RWPE1 (cell line): ENCODE measurements at regions of chr10 and their contacts with region 1.

Region 1: DNA sequence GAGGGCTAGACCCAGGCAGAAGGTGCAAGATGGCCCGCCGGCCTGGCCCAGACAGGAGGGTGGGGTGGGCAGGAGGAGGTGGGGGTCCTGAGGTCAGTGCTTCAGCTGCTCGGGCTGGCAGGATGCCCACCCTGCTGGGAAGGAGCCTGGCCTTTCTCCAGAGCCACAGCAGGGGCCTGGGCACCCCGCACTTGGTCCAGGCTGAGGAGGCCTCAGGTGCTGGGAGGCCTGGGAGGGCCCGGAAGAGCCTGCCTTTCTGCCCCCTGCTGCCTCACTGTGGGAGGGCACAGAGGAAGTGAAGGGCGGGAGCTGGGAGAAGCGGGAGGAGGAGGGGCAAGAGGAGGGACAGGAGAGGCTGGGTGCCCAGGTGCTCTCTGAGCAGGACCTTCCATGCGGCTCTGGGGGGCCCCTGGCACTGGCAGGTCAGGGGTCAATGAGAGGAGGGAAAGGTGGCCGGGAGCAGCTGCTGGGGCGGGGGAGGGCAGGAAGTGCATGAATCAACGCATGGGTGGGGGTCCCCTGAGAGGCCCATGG is 49.7 kb downstream of the PWWP2B start:
- DNase-seq: peak; percentile 64
- H3K27ac ChIP-seq: peak overlapping the region; percentile 99
- CTCF ChIP-seq: peak; percentile 47

Region 2: GRCh38 chr10:131167036-131167860 is 1279.5 kb before region 1 on chr10:
- CTCF ChIA-PET with region 1: no interaction called
- POLR2A ChIA-PET with region 1: no interaction called
- DNase-seq: no peak
- H3K27ac ChIP-seq: no peak overlapping the region
- CTCF ChIP-seq: no peak

Region 3: DNA sequence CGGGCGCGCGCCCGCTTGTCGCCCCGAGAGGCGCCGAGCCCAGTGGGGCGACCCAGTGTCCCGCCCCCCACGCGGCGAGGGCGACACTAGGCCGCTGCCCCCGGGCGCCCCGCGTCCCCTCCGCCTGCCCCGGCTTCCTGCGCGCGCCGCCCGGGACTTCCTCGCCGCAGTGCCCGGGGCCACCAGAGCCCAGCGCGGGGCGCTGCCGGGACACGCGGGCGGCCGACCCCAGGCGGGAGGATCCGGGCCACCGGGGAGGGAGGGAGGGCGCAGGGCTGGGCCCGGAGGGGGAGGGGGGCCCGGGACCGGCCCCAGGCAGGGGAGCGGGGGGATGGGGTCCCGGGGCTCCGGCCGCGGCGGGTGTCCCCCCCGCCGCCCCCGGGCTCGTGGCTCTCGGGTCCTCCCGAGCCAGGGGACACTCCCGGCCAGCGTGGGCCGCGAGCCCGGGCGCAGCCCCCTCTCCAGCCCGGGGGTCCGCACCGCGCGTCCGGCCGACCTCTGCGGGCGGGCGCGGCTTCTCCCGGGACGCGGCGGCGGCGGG is 50.2 kb before region 1 on chr10:
- CTCF ChIA-PET with region 1: interaction called, 13 read pairs
- POLR2A ChIA-PET with region 1: interaction called, 7 read pairs
- DNase-seq: peak; percentile 62
- H3K27ac ChIP-seq: peak overlapping the region; percentile 81
- CTCF ChIP-seq: peak; percentile 39; the same call in 1 of the 2 replicates

Region 4: GRCh38 chr10:132421392-132421877 is 25.3 kb before region 1 on chr10:
- CTCF ChIA-PET with region 1: interaction called, 22 read pairs
- POLR2A ChIA-PET with region 1: interaction called, 17 read pairs
- DNase-seq: peak; percentile 74
- H3K27ac ChIP-seq: peak overlapping the region; percentile 91
- CTCF ChIP-seq: no peak

Region 5: DNA sequence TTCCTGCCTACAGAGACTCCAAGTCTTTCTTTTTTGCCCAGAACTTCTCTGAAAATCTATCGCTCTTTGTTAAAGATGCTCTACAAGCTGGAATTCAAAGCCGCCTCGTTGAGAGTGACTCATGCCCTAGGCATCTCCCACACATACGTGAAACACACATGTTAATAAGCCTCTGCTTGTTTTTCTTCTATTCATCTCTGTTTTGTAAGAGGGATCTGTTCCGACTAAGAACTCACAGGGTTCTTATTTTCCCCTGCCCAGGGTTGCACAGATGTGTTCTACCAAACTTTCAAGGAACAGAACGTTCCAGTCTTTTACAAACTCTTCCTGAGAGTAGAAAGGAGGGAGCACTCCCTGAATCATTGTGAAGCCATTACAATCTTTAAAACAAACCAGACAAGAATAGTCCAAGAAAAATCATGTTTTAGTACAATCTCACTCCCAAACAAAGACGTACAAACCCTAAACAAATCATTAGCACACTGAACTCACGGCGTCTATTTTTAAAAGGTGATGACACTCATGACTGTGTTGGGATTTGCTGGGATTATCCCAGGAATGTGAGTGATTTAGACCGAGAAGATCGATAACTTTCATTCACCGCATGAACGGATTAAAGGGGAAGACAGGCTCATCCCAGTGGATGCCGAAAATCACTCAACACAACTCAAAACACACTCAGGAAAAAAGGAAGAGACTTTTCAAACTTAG is 35.5 kb after region 1 on chr10:
- CTCF ChIA-PET with region 1: no interaction called
- POLR2A ChIA-PET with region 1: no interaction called
- DNase-seq: peak; percentile 73
- H3K27ac ChIP-seq: peak overlapping the region; percentile 84
- CTCF ChIP-seq: no peak

Region 6: GRCh38 chr10:132551093-132551807 is 104.5 kb after region 1 on chr10:
- CTCF ChIA-PET with region 1: no interaction called
- POLR2A ChIA-PET with region 1: no interaction called
- DNase-seq: no peak
- H3K27ac ChIP-seq: no peak overlapping the region
- CTCF ChIP-seq: no peak